Body of pancreas (tissue), 4 donors: ENCODE measurements at regions of chr16 and their contacts with region 1.

Region 1: GRCh38 chr16:69709456-69710084 is 16.8 kb downstream of the NQO1 start:
- DNase-seq: peak in 1 of 4 donors; percentile 30
- ATAC-seq: peak; percentile 63
- H3K4me3 ChIP-seq: no peak overlapping the region
- H3K27ac ChIP-seq: peak overlapping the region in 2 of 4 donors; percentile 23
- H3K4me1 ChIP-seq: peaks cover 43% of the 10 kb centered on the region
- H3K27me3 ChIP-seq: no peaks in the 10 kb centered on the region
- CTCF ChIP-seq: peak; percentile 49 to 87 (median 76)
- POLR2A ChIP-seq: no peak

Region 2: GRCh38 chr16:69595127-69596036 is 114.2 kb before region 1 on chr16:
- intact Hi-C with region 1: no loop called
- DNase-seq: no peak
- ATAC-seq: no peak
- H3K4me3 ChIP-seq: no peak overlapping the region
- H3K27ac ChIP-seq: no peak overlapping the region
- H3K4me1 ChIP-seq: peaks cover 9% of the 10 kb centered on the region
- H3K27me3 ChIP-seq: no peaks in the 10 kb centered on the region
- CTCF ChIP-seq: no peak
- POLR2A ChIP-seq: no peak

Region 3: DNA sequence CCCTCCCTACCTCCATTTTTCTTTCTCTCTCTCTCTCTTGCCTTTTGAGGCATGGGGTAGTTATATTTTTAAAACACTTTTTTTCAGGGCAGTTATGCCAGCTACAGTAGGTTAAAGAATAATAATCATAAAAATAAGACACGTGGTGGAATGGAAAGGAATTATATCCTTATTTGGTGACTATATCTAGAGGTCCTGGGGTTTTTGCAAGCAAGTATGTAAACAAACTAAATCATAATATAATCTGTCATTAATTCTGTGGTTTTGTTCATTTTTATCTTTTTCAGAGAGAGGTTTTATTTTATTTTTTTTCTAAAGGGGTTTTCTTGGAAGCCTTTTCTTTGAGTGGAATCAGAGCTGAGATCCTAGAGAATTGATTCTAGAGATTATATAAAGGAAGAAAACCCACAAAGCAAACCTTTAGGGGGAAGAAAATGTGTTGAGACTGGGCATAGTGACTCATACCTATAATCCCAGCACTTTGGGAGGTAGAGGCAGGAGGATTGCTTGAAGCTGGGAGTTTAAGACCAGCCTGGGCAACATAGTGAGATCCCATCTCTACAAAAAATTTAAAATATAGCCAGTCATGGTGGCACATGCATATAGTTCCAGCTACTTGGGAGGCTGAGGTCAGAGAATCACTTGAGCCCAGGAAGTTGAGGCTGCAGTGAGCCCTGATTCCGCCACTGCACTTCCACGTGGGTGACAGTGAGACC is 36.4 kb before region 1 on chr16:
- intact Hi-C with region 1: no loop called
- DNase-seq: no peak
- ATAC-seq: no peak
- H3K4me3 ChIP-seq: no peak overlapping the region
- H3K27ac ChIP-seq: no peak overlapping the region
- H3K4me1 ChIP-seq: peaks cover 11% of the 10 kb centered on the region
- H3K27me3 ChIP-seq: no peaks in the 10 kb centered on the region
- CTCF ChIP-seq: no peak
- POLR2A ChIP-seq: no peak

Region 4: DNA sequence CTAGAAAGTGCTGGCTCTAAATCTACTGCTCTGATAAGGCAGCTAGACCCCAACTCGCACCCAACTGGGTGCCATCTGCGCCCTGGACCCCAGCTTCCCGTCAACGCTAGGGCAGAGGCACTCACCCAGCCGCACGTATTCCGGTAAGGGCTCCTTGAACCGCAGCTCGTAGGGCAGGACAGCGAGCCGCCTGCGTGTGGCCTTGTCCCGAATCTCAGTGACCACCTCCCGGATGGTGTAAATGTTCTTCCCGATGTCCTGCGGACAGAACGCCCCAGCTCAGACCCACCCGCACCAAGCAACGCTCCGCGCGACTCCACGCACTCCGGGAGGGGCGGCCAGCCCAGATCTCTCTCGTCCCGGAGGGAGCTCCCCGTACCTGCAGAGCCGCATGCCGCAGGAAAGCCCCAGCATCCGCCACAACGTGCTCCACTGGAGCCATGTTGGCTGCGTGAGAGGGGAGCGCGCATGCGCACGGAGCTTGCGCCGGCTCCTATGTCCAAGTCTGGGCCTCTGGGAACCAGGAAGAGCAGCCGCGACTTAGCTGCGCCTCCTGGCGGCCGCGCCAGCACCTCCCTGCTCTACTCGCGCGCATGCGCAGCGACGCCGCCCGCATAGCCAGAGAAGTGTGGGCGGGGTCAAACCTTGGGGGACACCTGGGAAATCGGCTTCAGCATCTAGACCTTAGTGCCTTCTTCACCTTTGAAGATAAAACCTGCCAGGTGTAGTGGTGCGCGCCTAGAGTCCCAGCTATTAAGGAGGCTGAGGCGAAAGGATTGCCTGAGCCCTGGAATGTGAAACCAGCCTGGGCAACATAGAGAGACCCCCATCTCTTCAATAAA is 45.1 kb after region 1 on chr16 and contains the start of gene NOB1:
- intact Hi-C with region 1: loop called (anchors 5 kb)
- DNase-seq: peak; percentile 96 to 98 (median 97)
- ATAC-seq: peak; percentile 100
- H3K4me3 ChIP-seq: peak within 1 kb of the TSS; percentile 85 to 96
- H3K27ac ChIP-seq: peak within 1 kb of the TSS; percentile 51 to 79 (median 69)
- H3K4me1 ChIP-seq: peaks cover 24% of the 10 kb centered on the region
- H3K27me3 ChIP-seq: no peaks in the 10 kb centered on the region
- CTCF ChIP-seq: peak; percentile 96 to 100 (median 99)
- POLR2A ChIP-seq: peak; percentile 22 to 89 (median 82)
- total RNA-seq, gene NOB1: 28.0 to 69.0 TPM

Region 5: GRCh38 chr16:69796351-69797118 is 87.0 kb after region 1 on chr16:
- intact Hi-C with region 1: no loop called
- DNase-seq: peak in 3 of 4 donors; percentile 27 to 51 (median 45)
- ATAC-seq: peak; percentile 85
- H3K4me3 ChIP-seq: no peak overlapping the region
- H3K27ac ChIP-seq: no peak overlapping the region
- H3K4me1 ChIP-seq: peaks cover 13% of the 10 kb centered on the region
- H3K27me3 ChIP-seq: no peaks in the 10 kb centered on the region
- CTCF ChIP-seq: peak; percentile 66 to 94 (median 90)
- POLR2A ChIP-seq: no peak

Region 6: DNA sequence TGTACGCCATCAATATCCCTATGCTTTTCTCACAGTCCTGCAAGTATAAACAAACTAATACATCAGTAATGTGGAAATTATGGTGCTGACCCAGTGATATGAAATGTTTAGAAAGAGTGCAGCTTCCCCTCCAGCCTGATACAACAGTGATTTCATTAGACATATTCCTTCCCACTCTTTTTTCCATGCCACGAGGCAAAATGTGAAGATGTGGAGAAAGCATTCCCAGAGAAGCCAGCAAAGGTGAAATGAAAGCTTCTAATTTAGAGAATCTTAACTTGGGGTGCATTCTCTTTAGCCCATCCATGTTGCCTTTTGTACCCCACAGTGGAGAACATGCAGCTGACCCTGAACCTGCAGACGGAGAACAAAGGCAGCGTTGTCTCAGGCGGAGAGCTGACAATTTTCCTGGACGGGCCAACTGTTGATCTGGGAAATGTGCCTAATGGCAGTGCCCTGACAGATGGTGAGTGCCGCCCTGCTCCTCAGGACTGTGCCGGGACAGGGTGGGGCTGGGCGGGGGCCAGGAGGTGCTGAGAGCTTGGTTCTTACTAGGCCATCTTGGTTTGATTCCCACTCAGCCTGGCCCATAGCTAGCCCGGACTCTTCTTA is 130.3 kb after region 1 on chr16:
- intact Hi-C with region 1: no loop called
- DNase-seq: peak; percentile 82 to 90 (median 86)
- ATAC-seq: peak; percentile 89
- H3K4me3 ChIP-seq: no peak overlapping the region
- H3K27ac ChIP-seq: peak overlapping the region; percentile 74 to 79 (median 78)
- H3K4me1 ChIP-seq: peaks cover 69% of the 10 kb centered on the region
- H3K27me3 ChIP-seq: no peaks in the 10 kb centered on the region
- CTCF ChIP-seq: no peak
- POLR2A ChIP-seq: no peak